CD4-positive, alpha-beta T cell (primary cell): ENCODE measurements at regions of chr11 and their contacts with region 1.

Region 1: GRCh38 chr11:83819933-83820549 is 533.9 kb upstream of the CCDC90B start:
- DNase-seq: peak in 3 of 14 experiments; percentile 22 to 33 (median 32)
- ATAC-seq: no peak
- H3K4me3 ChIP-seq: no peak overlapping the region
- H3K4me3 Mint-ChIP-seq: no peak overlapping the region
- H3K27ac ChIP-seq: no peak overlapping the region
- H3K27ac Mint-ChIP-seq: no peak overlapping the region
- H3K4me1 ChIP-seq: no peaks in the 10 kb centered on the region
- H3K4me1 Mint-ChIP-seq: no peaks in the 10 kb centered on the region
- H3K27me3 ChIP-seq: no peaks in the 10 kb centered on the region
- H3K27me3 Mint-ChIP-seq: no peaks in the 10 kb centered on the region
- CTCF ChIP-seq: peak; percentile 32

Region 2: DNA sequence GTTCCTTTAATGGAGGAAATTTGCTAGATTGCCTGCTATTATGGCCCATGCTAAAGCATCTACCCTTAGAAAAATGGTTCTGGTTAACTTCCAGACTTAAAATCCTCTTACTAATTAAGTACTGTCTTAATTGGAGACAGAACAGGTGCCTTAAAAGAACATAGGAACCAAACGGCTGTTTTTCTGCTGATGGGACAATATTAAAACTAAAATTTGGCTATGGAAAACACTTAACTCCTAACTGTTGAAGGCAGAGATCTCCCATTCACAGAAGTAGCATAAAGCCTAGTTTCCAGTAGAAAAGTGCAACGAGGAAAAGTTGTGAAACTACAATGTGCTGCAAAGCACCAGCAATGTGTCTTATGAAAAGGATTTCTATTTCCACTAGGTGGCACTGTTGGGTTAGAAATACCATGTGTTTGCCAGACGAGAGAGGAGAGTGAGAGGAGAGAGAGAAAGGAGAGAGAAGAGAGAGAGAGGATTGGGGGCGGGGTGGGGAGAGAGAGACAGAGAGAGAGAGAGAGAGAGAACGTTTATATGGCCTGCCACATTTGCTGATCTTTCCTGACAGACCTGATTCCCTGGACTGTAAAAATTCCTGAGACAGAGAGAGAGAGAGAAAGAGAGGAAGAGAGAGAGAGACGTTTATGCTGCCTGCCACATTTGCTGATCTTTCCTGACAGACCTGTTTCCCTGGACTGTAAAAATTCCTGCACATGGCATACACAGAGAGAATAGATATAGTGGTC is 1137.9 kb before region 1 on chr11:
- CTCF ChIA-PET with region 1: no interaction called
- POLR2A ChIA-PET with region 1: no interaction called
- intact Hi-C with region 1: loop called (anchors 1 to 5 kb)
- DNase-seq: peak in 4 of 14 experiments; percentile 5 to 71 (median 61)
- ATAC-seq: peak; percentile 52
- H3K4me3 ChIP-seq: no peak overlapping the region
- H3K4me3 Mint-ChIP-seq: no peak overlapping the region
- H3K27ac ChIP-seq: no peak overlapping the region
- H3K27ac Mint-ChIP-seq: no peak overlapping the region
- H3K4me1 ChIP-seq: peaks cover 3% of the 10 kb centered on the region
- H3K4me1 Mint-ChIP-seq: no peaks in the 10 kb centered on the region
- H3K27me3 ChIP-seq: no peaks in the 10 kb centered on the region
- H3K27me3 Mint-ChIP-seq: peaks cover 27% of the 10 kb centered on the region
- CTCF ChIP-seq: peak; percentile 65

Region 3: GRCh38 chr11:82718307-82718706 is 1101.7 kb before region 1 on chr11:
- CTCF ChIA-PET with region 1: no interaction called
- POLR2A ChIA-PET with region 1: no interaction called
- intact Hi-C with region 1: loop called (anchors 1 to 2 kb)
- DNase-seq: peak in 5 of 14 experiments; percentile 10 to 51 (median 37)
- ATAC-seq: peak; percentile 59
- H3K4me3 ChIP-seq: no peak overlapping the region
- H3K4me3 Mint-ChIP-seq: no peak overlapping the region
- H3K27ac ChIP-seq: no peak overlapping the region
- H3K27ac Mint-ChIP-seq: no peak overlapping the region
- H3K4me1 ChIP-seq: no peaks in the 10 kb centered on the region
- H3K4me1 Mint-ChIP-seq: no peaks in the 10 kb centered on the region
- H3K27me3 ChIP-seq: no peaks in the 10 kb centered on the region
- H3K27me3 Mint-ChIP-seq: peaks cover 10% of the 10 kb centered on the region
- CTCF ChIP-seq: peak; percentile 67

Region 4: GRCh38 chr11:83871054-83871453 is 51.0 kb after region 1 on chr11:
- CTCF ChIA-PET with region 1: no interaction called
- POLR2A ChIA-PET with region 1: no interaction called
- intact Hi-C with region 1: no loop called
- DNase-seq: no peak
- ATAC-seq: no peak
- H3K4me3 ChIP-seq: no peak overlapping the region
- H3K4me3 Mint-ChIP-seq: no peak overlapping the region
- H3K27ac ChIP-seq: no peak overlapping the region
- H3K27ac Mint-ChIP-seq: no peak overlapping the region
- H3K4me1 ChIP-seq: no peaks in the 10 kb centered on the region
- H3K4me1 Mint-ChIP-seq: no peaks in the 10 kb centered on the region
- H3K27me3 ChIP-seq: no peaks in the 10 kb centered on the region
- H3K27me3 Mint-ChIP-seq: no peaks in the 10 kb centered on the region
- CTCF ChIP-seq: no peak

Region 5: DNA sequence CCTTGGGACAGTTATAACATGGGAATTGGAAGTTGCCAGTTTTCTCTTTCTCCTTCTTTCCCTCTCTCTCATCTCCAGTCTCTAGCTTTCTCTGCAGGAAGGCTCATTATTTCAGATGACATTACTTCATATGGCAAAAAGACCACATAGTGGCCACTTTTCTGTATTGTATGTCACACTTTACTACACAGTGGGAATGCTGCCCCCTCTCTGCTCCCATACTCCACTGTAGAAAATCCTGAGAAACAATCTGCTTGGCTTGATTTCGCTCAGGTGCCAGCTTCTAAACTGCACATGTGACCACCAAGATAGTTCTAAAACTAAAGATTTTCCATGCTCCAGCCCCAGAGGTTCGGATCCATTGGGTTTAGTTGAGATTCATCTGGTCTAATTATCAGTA is 326.8 kb after region 1 on chr11:
- CTCF ChIA-PET with region 1: no interaction called
- POLR2A ChIA-PET with region 1: no interaction called
- intact Hi-C with region 1: loop called in 1 of 2 experiments (anchors 5 kb)
- DNase-seq: no peak
- ATAC-seq: no peak
- H3K4me3 ChIP-seq: no peak overlapping the region
- H3K4me3 Mint-ChIP-seq: no peak overlapping the region
- H3K27ac ChIP-seq: no peak overlapping the region
- H3K27ac Mint-ChIP-seq: no peak overlapping the region
- H3K4me1 ChIP-seq: no peaks in the 10 kb centered on the region
- H3K4me1 Mint-ChIP-seq: no peaks in the 10 kb centered on the region
- H3K27me3 ChIP-seq: no peaks in the 10 kb centered on the region
- H3K27me3 Mint-ChIP-seq: no peaks in the 10 kb centered on the region
- CTCF ChIP-seq: no peak